ENCODE measurements at regions of chr1 and their contacts with region 1.

Region 1: GRCh38 chr1:239951511-239952140 is 140.1 kb upstream of the FMN2 start:
- DNase-seq: peak; percentile 72 to 87 (median 85)
- H3K4me3 ChIP-seq: no peak overlapping the region
- H3K27ac ChIP-seq: no peak overlapping the region
- H3K4me1 ChIP-seq: no peaks in the 10 kb centered on the region
- H3K27me3 ChIP-seq: peaks cover 0 to 3% (median 0%) of the 10 kb centered on the region in 5 experiments

Region 2: DNA sequence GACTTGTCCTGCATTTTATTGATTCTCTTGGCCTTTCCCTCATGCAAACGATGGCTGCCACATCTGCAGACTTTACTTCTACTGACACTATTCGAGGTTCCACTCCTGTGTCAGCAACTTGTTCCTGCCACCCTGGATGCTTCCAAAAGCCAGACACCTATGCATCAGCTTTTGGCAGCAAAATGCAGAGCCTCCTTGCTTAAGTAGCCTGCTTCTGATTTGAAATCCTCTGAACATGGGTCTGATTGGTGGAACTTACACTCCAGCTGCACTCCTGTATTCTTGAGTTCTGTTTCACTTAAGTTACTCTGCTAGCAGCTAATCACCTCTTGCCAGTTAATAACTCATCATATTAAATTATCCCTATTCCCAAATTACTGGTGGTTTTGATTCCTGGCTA is 12.0 kb before region 1 on chr1:
- CTCF ChIA-PET with region 1: interaction called, 10 read pairs
- POLR2A ChIA-PET with region 1: no interaction called
- DNase-seq: no peak
- H3K4me3 ChIP-seq: no peak overlapping the region
- H3K27ac ChIP-seq: no peak overlapping the region
- H3K4me1 ChIP-seq: peaks cover 0 to 1% (median 0%) of the 10 kb centered on the region in 4 experiments
- H3K27me3 ChIP-seq: no peaks in the 10 kb centered on the region

Region 3: DNA sequence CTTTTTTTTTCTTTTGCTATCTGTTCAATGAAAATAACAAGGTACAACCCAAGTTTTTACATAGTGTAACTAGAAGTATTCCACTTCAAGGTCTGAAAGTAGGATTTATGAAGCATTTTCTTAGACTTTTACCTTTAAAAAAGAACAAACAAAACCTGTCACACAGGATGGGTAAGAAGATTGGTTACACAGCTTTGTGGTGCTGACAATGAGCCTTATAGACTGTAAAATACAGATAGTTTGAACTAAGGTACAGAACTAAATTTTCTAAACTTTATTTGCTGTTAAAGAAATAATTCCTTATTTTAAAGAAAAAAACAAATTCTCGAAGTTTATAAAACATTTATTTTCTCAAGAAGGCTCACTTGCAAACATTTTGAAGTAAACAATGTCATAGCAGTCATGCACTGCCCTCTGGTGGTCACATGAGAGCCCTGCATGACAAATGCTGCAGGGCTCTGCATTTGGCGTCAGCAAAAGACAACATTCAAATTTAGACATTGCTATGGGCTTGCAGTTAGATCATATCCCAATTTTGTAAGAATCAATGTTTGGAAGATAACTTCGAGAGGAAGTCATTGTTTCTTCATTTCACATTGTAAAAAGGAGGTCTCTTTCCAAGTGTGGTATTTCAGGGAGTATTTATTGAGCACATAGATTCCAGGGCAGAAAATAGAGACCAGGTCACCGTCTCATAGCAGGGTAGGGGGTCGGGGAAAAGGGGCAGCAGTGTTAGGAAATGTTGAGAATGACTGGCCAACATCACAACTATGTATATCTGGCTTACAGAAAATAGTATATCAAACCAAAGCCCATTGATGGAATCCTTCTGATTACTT is 24.7 kb after region 1 on chr1:
- CTCF ChIA-PET with region 1: interaction called, 89 read pairs
- POLR2A ChIA-PET with region 1: no interaction called
- DNase-seq: peak; percentile 58 to 76 (median 72)
- H3K4me3 ChIP-seq: no peak overlapping the region
- H3K27ac ChIP-seq: no peak overlapping the region
- H3K4me1 ChIP-seq: no peaks in the 10 kb centered on the region
- H3K27me3 ChIP-seq: no peaks in the 10 kb centered on the region

Region 4: GRCh38 chr1:239987103-239987745 is 35.6 kb after region 1 on chr1:
- CTCF ChIA-PET with region 1: interaction called, 13 read pairs
- POLR2A ChIA-PET with region 1: no interaction called
- DNase-seq: peak; percentile 56 to 75 (median 73)
- H3K4me3 ChIP-seq: no peak overlapping the region
- H3K27ac ChIP-seq: no peak overlapping the region
- H3K4me1 ChIP-seq: no peaks in the 10 kb centered on the region
- H3K27me3 ChIP-seq: peaks cover 0 to 3% (median 2%) of the 10 kb centered on the region in 5 experiments

Region 5: DNA sequence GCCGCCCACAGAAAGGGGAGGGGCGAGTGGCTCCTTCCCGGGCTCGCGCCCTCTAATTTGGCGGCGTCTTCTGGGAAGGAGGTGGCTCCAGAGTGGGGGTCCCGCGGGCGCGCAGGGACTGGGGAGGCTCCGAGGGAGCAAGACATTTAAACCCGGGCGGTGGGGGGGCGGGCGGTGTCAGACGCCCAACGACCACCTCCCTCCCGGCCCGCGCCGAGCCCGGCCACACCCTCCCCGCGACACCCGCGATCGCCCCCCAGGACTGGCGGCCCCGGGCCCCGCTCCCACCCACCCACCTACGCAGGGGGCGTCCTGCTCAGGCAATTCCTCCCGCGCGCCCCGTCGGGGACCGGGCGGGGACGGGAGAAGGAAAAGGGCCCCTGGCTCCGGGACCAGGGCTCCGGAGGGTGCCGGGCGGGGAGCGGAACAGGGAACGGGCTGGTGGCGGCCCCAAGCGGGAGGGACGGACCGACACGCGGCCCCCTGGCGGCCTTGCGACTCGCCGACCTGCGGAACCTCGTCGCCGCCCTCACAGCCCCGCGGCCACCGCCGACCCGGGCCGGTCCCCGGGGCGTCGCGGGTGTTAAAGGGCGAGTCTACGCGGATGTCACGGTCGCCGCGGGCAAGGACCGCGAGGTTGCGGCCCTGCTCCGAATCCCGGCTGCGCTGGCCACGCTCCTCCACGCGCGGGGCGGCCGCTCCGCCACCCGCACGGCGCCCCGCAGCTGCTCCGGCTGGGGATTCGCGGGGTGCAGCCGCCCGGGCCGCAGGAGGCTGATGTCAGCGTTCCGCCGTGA is 46.1 kb after region 1 on chr1:
- CTCF ChIA-PET with region 1: interaction called, 27 read pairs
- POLR2A ChIA-PET with region 1: no interaction called
- DNase-seq: peak; percentile 38 to 62 (median 50)
- H3K4me3 ChIP-seq: peak overlapping the region in 6 of 7 experiments; percentile 9 to 63 (median 46)
- H3K27ac ChIP-seq: no peak overlapping the region
- H3K4me1 ChIP-seq: peaks cover 0 to 10% (median 7%) of the 10 kb centered on the region in 4 experiments
- H3K27me3 ChIP-seq: peaks cover 16 to 82% (median 30%) of the 10 kb centered on the region in 5 experiments

Region 6: DNA sequence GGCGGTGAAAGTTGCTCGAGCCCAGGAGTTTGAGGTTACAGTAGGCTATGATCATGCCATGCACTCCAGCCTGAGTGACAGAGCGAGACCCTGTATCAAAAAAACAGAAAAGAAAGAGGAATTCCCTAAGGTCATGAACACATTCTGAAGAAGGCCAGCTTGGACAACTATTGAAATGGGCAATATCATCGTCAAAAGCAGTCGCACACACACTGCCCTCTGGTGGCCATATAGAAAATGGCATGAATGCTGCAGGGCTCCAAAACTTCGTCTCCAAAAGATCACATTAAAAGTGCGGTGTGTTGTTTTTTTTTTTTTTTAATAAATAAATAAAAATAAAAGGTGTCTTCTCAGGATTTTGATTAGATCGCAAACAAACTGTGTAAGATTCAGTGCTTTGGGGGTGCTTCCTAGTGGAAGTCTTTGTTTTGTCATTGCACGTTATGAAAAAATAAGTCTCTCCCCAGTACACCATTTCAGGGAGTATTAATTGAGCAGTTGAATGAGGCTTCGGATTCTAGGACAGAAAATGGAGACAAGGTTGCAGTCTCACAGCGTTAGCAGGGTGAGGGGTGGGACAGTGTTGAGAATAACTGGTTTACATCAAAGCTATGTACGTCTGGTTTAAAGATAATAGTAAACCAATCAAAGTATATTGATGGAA is 52.6 kb after region 1 on chr1:
- CTCF ChIA-PET with region 1: interaction called, 27 read pairs
- POLR2A ChIA-PET with region 1: no interaction called
- DNase-seq: peak in 2 of 3 donors; percentile 41 to 54
- H3K4me3 ChIP-seq: no peak overlapping the region
- H3K27ac ChIP-seq: no peak overlapping the region
- H3K4me1 ChIP-seq: no peaks in the 10 kb centered on the region
- H3K27me3 ChIP-seq: peaks cover 2 to 25% (median 3%) of the 10 kb centered on the region in 5 experiments

Region 7: GRCh38 chr1:241215203-241215602 is 1263.6 kb after region 1 on chr1:
- CTCF ChIA-PET with region 1: no interaction called
- POLR2A ChIA-PET with region 1: no interaction called
- DNase-seq: no peak
- H3K4me3 ChIP-seq: no peak overlapping the region
- H3K27ac ChIP-seq: no peak overlapping the region
- H3K4me1 ChIP-seq: no peaks in the 10 kb centered on the region
- H3K27me3 ChIP-seq: no peaks in the 10 kb centered on the region